ENCODE measurements at regions of chr4 and their contacts with region 1.

Region 1: GRCh38 chr4:9762823-9763475 is 18.5 kb upstream of the DRD5 start:
- DNase-seq: peak; percentile 55
- ATAC-seq: peak; percentile 46; the same call in 1 of the 2 replicates
- H3K4me3 ChIP-seq: no peak overlapping the region
- H3K27ac ChIP-seq: no peak overlapping the region
- H3K4me1 ChIP-seq: no peaks in the 10 kb centered on the region
- H3K27me3 ChIP-seq: no peaks in the 10 kb centered on the region
- CTCF ChIP-seq: peak; percentile 55
- POLR2A ChIP-seq: no peak
- RAD21 ChIP-seq: peak; percentile 64

Region 2: DNA sequence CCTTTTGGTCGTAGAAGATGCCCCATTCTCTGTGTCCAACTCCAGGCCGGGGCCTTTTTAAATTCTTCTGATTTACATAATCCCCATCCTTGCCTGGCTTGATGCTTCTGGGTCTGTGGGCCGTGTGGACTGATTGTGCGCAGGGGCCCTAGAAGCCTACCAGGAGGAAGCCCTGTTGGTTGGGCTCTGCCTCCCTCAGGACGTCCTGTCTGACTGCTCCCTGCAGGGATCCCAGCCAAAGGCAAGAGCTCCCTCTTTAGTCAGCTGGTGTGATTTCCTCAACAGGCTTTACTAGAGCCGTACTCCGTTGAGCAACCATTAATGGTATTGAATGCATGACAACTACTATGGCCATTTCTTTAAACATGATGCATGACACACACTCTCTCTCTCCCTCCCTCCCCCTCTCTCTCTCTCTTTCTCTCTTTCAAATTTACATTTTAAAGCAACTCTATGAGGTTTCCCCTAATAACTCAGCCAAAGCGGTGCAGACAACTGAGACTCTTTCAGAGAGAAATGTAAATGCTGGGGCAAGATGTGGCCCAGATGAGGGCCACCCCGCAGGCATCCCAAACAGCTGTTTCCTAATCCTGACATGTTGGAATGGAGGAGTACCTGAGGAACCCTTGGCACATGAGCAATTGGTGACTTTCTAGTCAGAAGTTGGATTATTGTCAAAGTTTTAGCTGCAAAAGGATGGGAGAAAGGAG is 135.8 kb after region 1 on chr4:
- CTCF ChIA-PET with region 1: no interaction called
- POLR2A ChIA-PET with region 1: no interaction called
- dilution Hi-C with region 1: no loop called
- in situ Hi-C with region 1: no loop called
- intact Hi-C with region 1: loop called (anchors 10 kb)
- DNase-seq: peak; percentile 16
- ATAC-seq: peak; percentile 80
- H3K4me3 ChIP-seq: no peak overlapping the region
- H3K27ac ChIP-seq: no peak overlapping the region
- H3K4me1 ChIP-seq: no peaks in the 10 kb centered on the region
- H3K27me3 ChIP-seq: no peaks in the 10 kb centered on the region; the same call in 1 of the 2 replicates
- CTCF ChIP-seq: no peak
- POLR2A ChIP-seq: no peak
- RAD21 ChIP-seq: no peak; the same call in 1 of the 2 replicates

Region 3: GRCh38 chr4:10018818-10019461 is 256.0 kb after region 1 on chr4:
- CTCF ChIA-PET with region 1: interaction called, 5 read pairs
- POLR2A ChIA-PET with region 1: no interaction called
- dilution Hi-C with region 1: no loop called
- in situ Hi-C with region 1: loop called (anchors 5 kb)
- intact Hi-C with region 1: loop called (anchors 1 kb)
- DNase-seq: peak; percentile 93
- ATAC-seq: peak; percentile 96
- H3K4me3 ChIP-seq: peak overlapping the region; percentile 29
- H3K27ac ChIP-seq: peak overlapping the region; percentile 84
- H3K4me1 ChIP-seq: peaks cover 6% of the 10 kb centered on the region; the same call in 1 of the 2 replicates
- H3K27me3 ChIP-seq: no peaks in the 10 kb centered on the region
- CTCF ChIP-seq: peak; percentile 99
- POLR2A ChIP-seq: 0 out of 2 replicates have a peak, but pooled peaks have one; percentile 24
- RAD21 ChIP-seq: peak; percentile 77

Region 4: DNA sequence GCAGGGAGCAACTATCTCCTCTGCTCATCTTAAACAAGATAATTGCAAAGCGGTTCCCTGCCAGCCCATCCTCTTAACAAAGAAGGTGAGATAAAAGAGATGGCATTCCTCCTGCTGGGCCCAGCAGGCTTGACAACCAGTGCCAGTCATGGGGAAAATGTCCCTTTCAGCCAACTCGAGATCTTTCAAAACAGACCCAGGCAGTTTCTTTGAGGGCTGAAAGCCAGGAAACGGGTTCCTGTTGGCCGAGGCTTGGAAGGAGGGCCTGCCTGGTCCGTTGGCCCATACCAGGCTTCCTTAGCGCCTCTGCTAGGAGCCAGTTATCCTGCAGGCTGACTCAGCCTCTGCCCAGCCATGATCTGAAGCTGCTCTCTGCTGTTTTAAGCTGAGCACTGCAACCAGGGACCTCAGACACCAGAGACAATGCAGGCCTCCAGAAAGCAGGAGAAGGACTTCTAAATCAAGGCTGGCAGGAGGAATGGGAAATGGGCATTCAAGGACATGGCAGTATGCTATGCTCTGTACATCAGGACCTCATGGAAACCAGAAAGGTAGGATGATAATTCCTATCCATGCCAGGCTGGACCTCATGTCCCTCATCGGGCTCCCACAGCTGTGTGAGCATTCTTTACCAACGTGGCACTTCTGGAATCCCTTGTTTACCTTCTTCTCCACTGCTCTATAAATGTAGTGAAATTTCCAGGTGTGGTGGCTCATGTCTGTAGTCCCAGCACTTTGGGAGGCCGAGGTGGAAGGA is 300.8 kb after region 1 on chr4:
- CTCF ChIA-PET with region 1: no interaction called
- POLR2A ChIA-PET with region 1: no interaction called
- dilution Hi-C with region 1: no loop called
- in situ Hi-C with region 1: no loop called
- intact Hi-C with region 1: loop called (anchors 1 kb)
- DNase-seq: peak; percentile 70
- ATAC-seq: peak; percentile 93
- H3K4me3 ChIP-seq: no peak overlapping the region
- H3K27ac ChIP-seq: no peak overlapping the region
- H3K4me1 ChIP-seq: no peaks in the 10 kb centered on the region; the same call in 1 of the 2 replicates
- H3K27me3 ChIP-seq: no peaks in the 10 kb centered on the region
- CTCF ChIP-seq: peak; percentile 66
- POLR2A ChIP-seq: no peak
- RAD21 ChIP-seq: peak; percentile 68

Region 5: GRCh38 chr4:10554694-10555093 is 791.7 kb after region 1 on chr4:
- CTCF ChIA-PET with region 1: no interaction called
- POLR2A ChIA-PET with region 1: no interaction called
- dilution Hi-C with region 1: no loop called
- in situ Hi-C with region 1: no loop called
- intact Hi-C with region 1: loop called (anchors 1 kb)
- DNase-seq: peak; percentile 59
- ATAC-seq: peak; percentile 90
- H3K4me3 ChIP-seq: no peak overlapping the region
- H3K27ac ChIP-seq: no peak overlapping the region
- H3K4me1 ChIP-seq: no peaks in the 10 kb centered on the region
- H3K27me3 ChIP-seq: no peaks in the 10 kb centered on the region; the same call in 1 of the 2 replicates
- CTCF ChIP-seq: peak; percentile 84
- POLR2A ChIP-seq: no peak
- RAD21 ChIP-seq: peak; percentile 83

Region 6: DNA sequence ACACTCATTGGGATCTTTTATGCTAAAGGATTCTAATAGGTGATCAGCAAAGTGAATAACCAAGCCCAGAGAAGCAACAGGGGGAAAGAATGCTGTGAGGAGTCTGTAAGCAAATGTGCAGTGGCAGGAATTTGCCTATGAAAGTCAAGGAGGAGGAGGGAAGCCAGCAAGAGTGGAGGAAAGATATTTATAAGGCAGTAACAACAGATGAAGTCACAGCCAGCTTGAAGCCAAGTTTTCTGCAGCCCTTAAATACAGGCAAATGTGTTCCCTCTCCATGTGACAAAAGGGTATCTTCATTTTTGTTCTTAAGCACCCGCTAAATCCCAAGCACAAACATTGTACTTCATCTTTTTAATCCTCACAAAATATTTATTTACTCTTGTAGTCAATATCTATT is 1196.6 kb after region 1 on chr4:
- CTCF ChIA-PET with region 1: no interaction called
- POLR2A ChIA-PET with region 1: no interaction called
- dilution Hi-C with region 1: no loop called
- in situ Hi-C with region 1: no loop called
- intact Hi-C with region 1: no loop called
- DNase-seq: no peak
- ATAC-seq: no peak
- H3K4me3 ChIP-seq: no peak overlapping the region
- H3K27ac ChIP-seq: no peak overlapping the region
- H3K4me1 ChIP-seq: no peaks in the 10 kb centered on the region
- H3K27me3 ChIP-seq: no peaks in the 10 kb centered on the region
- CTCF ChIP-seq: no peak
- POLR2A ChIP-seq: no peak
- RAD21 ChIP-seq: no peak

Measured in IMR-90 (cell line).